Activated CD4-positive, alpha-beta memory T cell treated with anti-CD3 and anti-CD28 coated beads, Interleukin-2, amount 10 ng/mL, durations not matched to agents 7 days and 5 days (primary cell): ENCODE measurements at regions of chr2 and their contacts with region 1.

Region 1: DNA sequence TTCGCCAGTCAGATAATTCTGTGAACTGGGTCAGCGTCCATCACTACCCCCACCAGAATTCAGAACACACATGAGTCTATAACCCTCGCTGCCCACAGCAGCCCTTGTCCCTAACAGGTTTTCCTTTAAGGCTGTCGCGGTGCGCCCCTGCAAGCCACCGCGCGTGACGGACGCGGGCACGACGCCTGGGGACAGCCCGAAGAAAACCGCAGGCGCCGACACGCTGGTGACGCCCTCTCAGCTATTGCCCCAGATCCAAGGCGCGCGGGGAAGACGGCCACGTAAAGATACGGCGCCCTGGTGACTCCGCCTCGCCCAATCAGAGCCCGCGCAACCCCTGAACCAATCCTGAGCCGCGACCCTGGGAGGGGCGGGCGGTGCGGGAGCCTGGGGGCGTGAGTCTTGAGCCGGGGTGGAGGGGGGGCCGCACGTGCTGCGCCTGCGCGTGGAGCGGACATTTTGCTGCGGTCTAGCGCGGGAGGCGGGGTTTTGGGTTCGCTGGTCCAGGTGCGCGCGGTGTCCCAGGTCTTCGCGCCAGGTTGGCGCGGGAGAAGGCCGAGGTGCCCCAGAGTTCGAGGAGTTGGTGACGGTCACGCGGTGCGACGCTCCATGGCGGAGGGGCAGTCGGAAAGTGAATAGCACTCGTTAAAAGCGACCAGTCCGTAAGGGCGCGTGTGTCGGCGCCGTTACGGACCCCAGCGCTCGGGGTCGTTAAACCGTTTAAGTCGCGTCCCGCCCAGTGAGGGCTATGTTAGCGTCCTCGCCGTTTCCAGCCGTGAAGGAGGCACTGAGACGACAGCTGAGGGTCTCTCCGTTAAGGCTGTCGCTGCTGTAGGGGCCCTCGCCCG is 15.9 kb downstream of the NMUR1 start:
- DNase-seq: peak; percentile 99
- H3K4me3 Mint-ChIP-seq: peak overlapping the region; percentile 88
- H3K27ac Mint-ChIP-seq: peak overlapping the region; percentile 86
- H3K4me1 Mint-ChIP-seq: peaks cover 29% of the 10 kb centered on the region
- H3K27me3 Mint-ChIP-seq: peaks cover 14% of the 10 kb centered on the region

Region 2: GRCh38 chr2:231482806-231483391 is 31.4 kb before region 1 on chr2:
- CTCF ChIA-PET with region 1: interaction called, 14 read pairs
- POLR2A ChIA-PET with region 1: interaction called, 9 read pairs
- DNase-seq: peak; percentile 78
- H3K4me3 Mint-ChIP-seq: peak overlapping the region; percentile 76
- H3K27ac Mint-ChIP-seq: peak overlapping the region; percentile 83
- H3K4me1 Mint-ChIP-seq: peaks cover 23% of the 10 kb centered on the region
- H3K27me3 Mint-ChIP-seq: no peaks in the 10 kb centered on the region